ENCODE measurements at regions of chr4 and their contacts with region 1.

Region 1: GRCh38 chr4:21790438-21791029 is 158.0 kb downstream of the KCNIP4 start:
- DNase-seq: peak in 1 of 2 experiments; percentile 39
- H3K4me3 ChIP-seq: no peak overlapping the region
- H3K4me3 Mint-ChIP-seq: no peak overlapping the region
- H3K27ac Mint-ChIP-seq: no peak overlapping the region
- H3K4me1 ChIP-seq: no peaks in the 10 kb centered on the region
- H3K4me1 Mint-ChIP-seq: no peaks in the 10 kb centered on the region
- H3K27me3 ChIP-seq: no peaks in the 10 kb centered on the region
- H3K27me3 Mint-ChIP-seq: no peaks in the 10 kb centered on the region
- CTCF ChIP-seq: peak; percentile 41

Region 2: DNA sequence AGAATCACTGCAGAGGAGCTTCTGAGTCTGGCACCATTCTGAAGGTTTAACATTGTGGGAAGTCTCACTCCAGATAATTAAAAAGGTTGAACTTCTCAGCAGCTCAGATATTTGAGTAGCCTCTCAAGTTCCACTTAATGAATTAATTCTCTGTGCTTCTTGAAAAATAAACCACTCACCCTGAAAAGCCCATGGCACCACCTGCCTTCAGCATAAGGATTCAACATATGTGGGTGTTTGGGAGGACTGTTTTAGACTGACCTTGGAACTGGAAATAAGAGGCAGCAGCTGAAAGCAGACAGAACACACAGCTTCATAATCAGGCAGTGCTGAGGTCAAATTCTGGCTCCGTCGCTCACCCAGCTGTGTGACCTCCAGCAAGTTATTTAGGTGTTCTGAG is 57.5 kb after region 1 on chr4:
- CTCF ChIA-PET with region 1: no interaction called
- POLR2A ChIA-PET with region 1: no interaction called
- intact Hi-C with region 1: no loop called
- DNase-seq: no peak
- H3K4me3 ChIP-seq: no peak overlapping the region
- H3K4me3 Mint-ChIP-seq: no peak overlapping the region
- H3K27ac Mint-ChIP-seq: no peak overlapping the region
- H3K4me1 ChIP-seq: no peaks in the 10 kb centered on the region
- H3K4me1 Mint-ChIP-seq: no peaks in the 10 kb centered on the region
- H3K27me3 ChIP-seq: no peaks in the 10 kb centered on the region
- H3K27me3 Mint-ChIP-seq: peaks cover 12% of the 10 kb centered on the region
- CTCF ChIP-seq: no peak

Region 3: DNA sequence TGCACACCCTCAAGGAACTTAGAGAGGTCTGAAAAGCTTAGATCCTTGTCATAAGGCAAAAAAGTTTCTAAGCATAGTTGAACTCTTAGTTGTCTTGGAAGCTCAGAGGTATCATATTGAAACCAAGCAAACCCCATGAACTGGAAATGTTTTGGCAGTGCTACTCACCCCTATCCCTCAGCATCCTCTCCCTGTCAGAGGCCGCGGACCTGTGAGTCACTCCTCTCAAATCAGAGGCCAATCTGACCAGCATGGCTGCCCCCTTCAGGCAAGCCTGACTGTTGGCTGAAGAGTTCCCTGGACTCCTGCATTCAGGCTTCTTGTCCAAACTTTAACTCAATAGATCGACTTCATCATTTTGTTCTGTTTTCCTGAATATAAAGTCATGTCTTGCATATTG is 88.7 kb after region 1 on chr4:
- CTCF ChIA-PET with region 1: no interaction called
- POLR2A ChIA-PET with region 1: no interaction called
- intact Hi-C with region 1: loop called (anchors 1 kb)
- DNase-seq: peak; percentile 27 to 36
- H3K4me3 ChIP-seq: no peak overlapping the region
- H3K4me3 Mint-ChIP-seq: no peak overlapping the region
- H3K27ac Mint-ChIP-seq: no peak overlapping the region
- H3K4me1 ChIP-seq: no peaks in the 10 kb centered on the region
- H3K4me1 Mint-ChIP-seq: no peaks in the 10 kb centered on the region
- H3K27me3 ChIP-seq: no peaks in the 10 kb centered on the region
- H3K27me3 Mint-ChIP-seq: peaks cover 7% of the 10 kb centered on the region
- CTCF ChIP-seq: peak in 1 of 2 experiments; percentile 6

Region 4: DNA sequence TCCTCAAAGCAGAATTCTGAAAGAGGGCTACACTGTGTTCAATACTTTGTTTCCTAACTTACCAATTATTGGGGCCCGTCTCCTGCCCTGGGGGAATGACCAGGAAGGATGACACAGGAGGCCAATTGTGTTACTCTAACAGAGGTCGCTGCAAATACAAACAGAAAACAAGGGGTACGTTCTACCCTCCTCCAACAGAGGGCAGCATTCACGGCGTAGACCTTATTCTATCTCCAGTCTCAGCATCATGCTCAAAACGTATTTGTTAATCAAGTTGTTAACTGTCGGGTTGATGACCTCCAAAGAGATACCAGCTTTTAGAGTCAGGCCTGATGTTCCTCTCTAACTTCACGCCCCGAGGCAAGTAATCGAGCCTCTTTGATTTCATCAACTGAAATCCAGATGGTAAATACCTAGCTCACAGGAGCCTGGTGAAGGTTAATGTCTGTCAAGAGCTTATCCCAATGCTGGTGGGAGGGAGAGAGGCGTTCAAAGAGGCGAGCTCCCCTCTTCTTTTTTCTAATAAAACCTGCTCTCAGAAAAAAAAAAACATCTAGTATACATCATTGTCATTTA is 339.0 kb after region 1 on chr4:
- CTCF ChIA-PET with region 1: no interaction called
- POLR2A ChIA-PET with region 1: interaction called, 3 read pairs
- intact Hi-C with region 1: loop called (anchors 5 kb)
- DNase-seq: peak; percentile 24 to 33
- H3K4me3 ChIP-seq: no peak overlapping the region
- H3K4me3 Mint-ChIP-seq: no peak overlapping the region
- H3K27ac Mint-ChIP-seq: no peak overlapping the region
- H3K4me1 ChIP-seq: no peaks in the 10 kb centered on the region
- H3K4me1 Mint-ChIP-seq: no peaks in the 10 kb centered on the region
- H3K27me3 ChIP-seq: no peaks in the 10 kb centered on the region
- H3K27me3 Mint-ChIP-seq: no peaks in the 10 kb centered on the region
- CTCF ChIP-seq: peak; percentile 24 to 35

Region 5: DNA sequence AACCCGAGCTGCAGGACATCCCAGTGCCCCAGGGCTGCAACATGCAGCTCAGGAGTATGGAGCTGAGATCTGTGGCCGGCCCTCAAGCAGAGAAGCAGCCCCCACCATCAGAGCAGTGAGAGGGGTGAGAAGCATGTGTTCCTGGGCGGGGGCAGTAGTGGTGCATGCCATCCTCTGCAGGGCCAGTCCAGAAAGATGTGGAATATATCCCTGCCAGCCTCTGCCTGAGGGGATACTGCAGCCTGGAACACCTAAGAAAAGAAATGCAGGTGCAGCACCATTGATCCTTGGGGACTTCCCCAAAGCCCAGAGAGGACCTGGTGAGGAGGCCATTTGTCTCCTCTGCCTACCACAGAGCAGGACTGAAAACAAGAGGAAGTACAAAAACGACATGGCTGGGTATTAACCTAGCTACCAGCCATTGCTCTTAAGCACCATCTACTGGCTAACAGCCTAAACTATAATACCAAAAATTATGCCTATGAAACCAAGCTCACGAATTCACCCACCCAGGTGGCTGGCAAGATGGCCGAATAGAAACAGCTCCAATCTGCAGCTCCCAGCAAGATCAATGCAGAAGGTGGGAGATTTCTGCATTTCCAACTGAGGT is 566.6 kb after region 1 on chr4:
- CTCF ChIA-PET with region 1: interaction called, 15 read pairs
- POLR2A ChIA-PET with region 1: no interaction called
- intact Hi-C with region 1: loop called (anchors 1 kb)
- DNase-seq: peak in 1 of 2 experiments; percentile 2
- H3K4me3 ChIP-seq: no peak overlapping the region
- H3K4me3 Mint-ChIP-seq: no peak overlapping the region
- H3K27ac Mint-ChIP-seq: no peak overlapping the region
- H3K4me1 ChIP-seq: no peaks in the 10 kb centered on the region
- H3K4me1 Mint-ChIP-seq: no peaks in the 10 kb centered on the region
- H3K27me3 ChIP-seq: no peaks in the 10 kb centered on the region
- H3K27me3 Mint-ChIP-seq: no peaks in the 10 kb centered on the region
- CTCF ChIP-seq: peak in 1 of 2 experiments; percentile 35

Region 6: DNA sequence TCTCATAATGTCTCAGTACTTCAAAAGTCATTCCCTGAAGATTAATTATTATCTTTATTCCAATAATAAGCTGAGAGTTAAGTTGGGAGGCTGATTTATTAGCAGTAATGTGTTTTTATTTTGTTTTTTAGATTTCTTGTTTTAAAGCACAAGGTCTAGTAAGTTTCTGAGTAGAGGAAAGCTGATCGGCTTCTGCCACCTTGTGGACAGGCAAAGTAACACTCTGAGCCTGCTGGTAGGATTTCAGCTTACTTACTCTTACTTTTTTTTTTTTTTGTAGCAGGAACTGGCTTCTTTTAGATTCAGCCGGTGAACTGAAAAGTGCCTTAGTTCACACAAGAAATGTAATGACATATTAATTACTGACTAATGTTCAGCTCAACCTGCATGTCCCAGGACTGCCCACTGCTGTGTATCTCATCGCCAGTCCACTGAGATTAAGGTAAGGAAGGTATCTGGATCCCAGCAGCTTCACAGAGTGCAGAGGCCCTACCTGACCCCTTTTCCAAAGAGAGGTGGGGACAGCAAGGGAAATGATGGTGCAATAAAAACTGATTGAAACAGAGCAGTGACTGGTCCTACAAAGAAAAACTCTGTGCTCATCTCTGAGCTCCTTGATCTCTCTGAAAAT is 598.8 kb after region 1 on chr4:
- CTCF ChIA-PET with region 1: interaction called, 22 read pairs
- POLR2A ChIA-PET with region 1: no interaction called
- intact Hi-C with region 1: loop called (anchors 1 kb)
- DNase-seq: peak; percentile 54 to 55
- H3K4me3 ChIP-seq: no peak overlapping the region
- H3K4me3 Mint-ChIP-seq: no peak overlapping the region
- H3K27ac Mint-ChIP-seq: no peak overlapping the region
- H3K4me1 ChIP-seq: no peaks in the 10 kb centered on the region
- H3K4me1 Mint-ChIP-seq: no peaks in the 10 kb centered on the region
- H3K27me3 ChIP-seq: no peaks in the 10 kb centered on the region
- H3K27me3 Mint-ChIP-seq: no peaks in the 10 kb centered on the region
- CTCF ChIP-seq: peak; percentile 69 to 79

Region 7: DNA sequence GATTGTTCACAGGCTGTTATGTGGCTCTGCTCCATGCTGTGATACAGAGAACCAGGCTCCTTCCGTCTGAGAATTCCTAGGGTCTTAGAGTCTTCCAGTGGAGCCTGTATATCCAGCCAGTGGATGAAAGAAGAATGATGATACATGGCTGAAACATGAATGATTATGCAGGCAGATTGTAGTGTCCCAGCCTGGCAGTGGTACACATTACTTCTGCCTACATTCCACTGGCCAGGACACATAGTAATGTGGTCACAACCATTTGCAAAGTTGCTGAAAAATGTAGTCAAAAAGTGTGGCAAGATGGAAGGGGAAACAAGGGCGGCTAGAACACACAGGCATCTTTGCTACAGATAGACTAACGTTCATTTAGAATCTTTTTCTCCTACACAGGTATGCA is 897.7 kb after region 1 on chr4:
- CTCF ChIA-PET with region 1: no interaction called
- POLR2A ChIA-PET with region 1: no interaction called
- intact Hi-C with region 1: loop called (anchors 1 kb)
- DNase-seq: no peak
- H3K4me3 ChIP-seq: no peak overlapping the region
- H3K4me3 Mint-ChIP-seq: no peak overlapping the region
- H3K27ac Mint-ChIP-seq: no peak overlapping the region
- H3K4me1 ChIP-seq: no peaks in the 10 kb centered on the region
- H3K4me1 Mint-ChIP-seq: peaks cover 27% of the 10 kb centered on the region
- H3K27me3 ChIP-seq: no peaks in the 10 kb centered on the region
- H3K27me3 Mint-ChIP-seq: no peaks in the 10 kb centered on the region
- CTCF ChIP-seq: no peak